Endothelial cell of umbilical vein (primary cell): ENCODE measurements at regions of chr4 and their contacts with region 1.

Region 1: GRCh38 chr4:48093949-48094550 is 40.0 kb downstream of the TXK start:
- DNase-seq: peak; percentile 87
- H3K4me3 ChIP-seq: no peak overlapping the region
- H3K27ac ChIP-seq: no peak overlapping the region
- H3K4me1 ChIP-seq: peaks cover 15% of the 10 kb centered on the region
- H3K27me3 ChIP-seq: no peaks in the 10 kb centered on the region
- CTCF ChIP-seq: no peak
- POLR2A ChIP-seq: no peak

Region 2: GRCh38 chr4:48002267-48002666 is 91.8 kb before region 1 on chr4:
- CTCF ChIA-PET with region 1: interaction called, 11 read pairs
- POLR2A ChIA-PET with region 1: no interaction called
- dilution Hi-C with region 1: no loop called
- intact Hi-C with region 1: no loop called
- DNase-seq: no peak
- H3K4me3 ChIP-seq: no peak overlapping the region
- H3K27ac ChIP-seq: no peak overlapping the region
- H3K4me1 ChIP-seq: no peaks in the 10 kb centered on the region
- H3K27me3 ChIP-seq: no peaks in the 10 kb centered on the region
- CTCF ChIP-seq: no peak
- POLR2A ChIP-seq: no peak

Region 3: DNA sequence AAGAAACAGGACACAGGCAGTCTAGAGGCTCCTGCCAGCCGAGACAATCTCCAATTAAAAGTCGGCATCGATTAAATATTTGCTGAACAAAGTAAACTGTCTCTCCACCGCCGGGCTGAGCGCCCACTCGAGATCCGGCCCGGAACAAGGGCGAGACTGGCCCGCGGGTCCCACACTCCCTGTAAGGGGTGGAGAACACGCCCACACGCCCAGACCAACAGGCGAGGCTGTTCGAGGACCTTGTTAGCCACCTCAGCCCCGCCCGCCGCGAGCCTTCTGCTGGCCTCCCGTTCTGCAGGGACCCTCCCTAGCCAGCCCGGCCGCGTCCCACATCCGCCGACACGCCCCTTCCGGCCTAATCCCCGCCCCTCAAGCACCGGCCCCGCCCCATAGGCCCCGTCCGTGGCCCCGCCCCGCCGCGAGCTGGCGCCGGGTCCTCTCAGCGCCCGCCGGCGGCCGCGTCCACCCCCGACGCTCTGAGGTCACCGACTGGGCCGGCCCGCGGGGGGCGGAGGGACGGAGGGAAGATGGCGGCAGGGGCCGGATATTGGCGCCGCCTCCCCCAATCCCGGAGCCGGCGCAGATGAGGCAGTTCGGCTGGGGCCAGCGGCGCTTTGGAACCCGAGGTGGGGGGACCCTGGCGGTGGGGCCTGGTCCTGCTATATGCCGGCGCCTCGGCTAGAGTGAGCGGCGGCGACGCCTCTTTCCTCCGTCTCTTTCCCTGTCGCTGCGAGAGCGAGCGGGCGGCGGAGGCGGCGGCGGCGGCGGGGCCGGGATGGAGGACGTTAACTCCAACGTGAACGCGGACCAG is 247.1 kb after region 1 on chr4 and contains the start of gene SLAIN2:
- CTCF ChIA-PET with region 1: no interaction called
- POLR2A ChIA-PET with region 1: no interaction called
- dilution Hi-C with region 1: no loop called
- intact Hi-C with region 1: no loop called
- DNase-seq: peak; percentile 98
- H3K4me3 ChIP-seq: peak within 1 kb of the TSS; percentile 75 to 95 (median 92)
- H3K27ac ChIP-seq: peak within 1 kb of the TSS; percentile 98
- H3K4me1 ChIP-seq: peaks cover 25% of the 10 kb centered on the region
- H3K27me3 ChIP-seq: no peaks in the 10 kb centered on the region
- CTCF ChIP-seq: peak; percentile 36 to 57
- POLR2A ChIP-seq: peak; percentile 94
- total RNA-seq, gene SLAIN2: 40.6 and 49.5 TPM in 2 replicates